ENCODE measurements at regions of chr16 and their contacts with region 1.

Region 1: GRCh38 chr16:30585400-30586189 is at the start of gene ZNF785:
- DNase-seq: peak; percentile 98
- ATAC-seq: peak; percentile 98
- H3K4me3 Mint-ChIP-seq: peak within 1 kb of the TSS; percentile 96
- H3K27ac Mint-ChIP-seq: peak within 1 kb of the TSS; percentile 87
- H3K4me1 Mint-ChIP-seq: peaks cover 30% of the 10 kb centered on the region
- H3K27me3 Mint-ChIP-seq: no peaks in the 10 kb centered on the region
- total RNA-seq, gene ZNF785: 11.7 to 13.7 TPM

Region 2: DNA sequence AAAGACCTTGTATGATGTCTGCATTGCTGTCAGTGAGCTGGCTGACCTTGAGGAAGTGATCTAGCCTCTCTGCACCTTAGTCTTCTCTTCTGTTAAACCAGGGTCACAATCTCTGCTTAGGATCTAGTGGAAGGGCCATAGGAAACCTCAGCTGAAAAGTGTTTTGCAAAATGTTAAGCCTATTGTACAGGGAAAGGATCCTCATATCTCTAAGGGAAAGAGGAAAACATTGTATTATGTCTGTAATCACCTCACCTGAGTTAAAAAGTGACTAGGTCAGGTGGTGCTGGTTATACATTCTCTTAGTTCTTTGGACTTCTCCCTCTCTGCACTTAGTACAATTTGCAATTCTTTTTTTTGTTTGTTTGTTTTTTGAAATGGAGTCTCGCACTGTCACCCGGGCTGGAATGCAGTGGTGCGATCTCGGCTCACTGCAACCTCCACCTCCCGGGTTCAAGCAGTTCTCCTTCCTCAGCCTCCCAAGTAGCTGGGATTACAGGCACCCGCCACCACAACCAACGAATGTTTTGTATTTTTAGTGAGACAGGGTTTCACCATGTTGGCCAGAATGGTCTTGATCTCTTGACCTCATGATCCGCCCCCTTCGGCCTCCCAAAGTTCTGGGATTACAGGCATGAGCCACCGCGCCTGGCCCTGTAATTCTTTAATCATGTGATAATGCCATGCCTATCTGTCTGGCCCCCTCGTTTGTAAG is 137.9 kb before region 1 on chr16:
- CTCF ChIA-PET with region 1: no interaction called
- POLR2A ChIA-PET with region 1: no interaction called
- DNase-seq: no peak
- ATAC-seq: no peak
- H3K4me3 Mint-ChIP-seq: no peak overlapping the region
- H3K27ac Mint-ChIP-seq: no peak overlapping the region
- H3K4me1 Mint-ChIP-seq: peaks cover 63% of the 10 kb centered on the region
- H3K27me3 Mint-ChIP-seq: no peaks in the 10 kb centered on the region

Region 3: DNA sequence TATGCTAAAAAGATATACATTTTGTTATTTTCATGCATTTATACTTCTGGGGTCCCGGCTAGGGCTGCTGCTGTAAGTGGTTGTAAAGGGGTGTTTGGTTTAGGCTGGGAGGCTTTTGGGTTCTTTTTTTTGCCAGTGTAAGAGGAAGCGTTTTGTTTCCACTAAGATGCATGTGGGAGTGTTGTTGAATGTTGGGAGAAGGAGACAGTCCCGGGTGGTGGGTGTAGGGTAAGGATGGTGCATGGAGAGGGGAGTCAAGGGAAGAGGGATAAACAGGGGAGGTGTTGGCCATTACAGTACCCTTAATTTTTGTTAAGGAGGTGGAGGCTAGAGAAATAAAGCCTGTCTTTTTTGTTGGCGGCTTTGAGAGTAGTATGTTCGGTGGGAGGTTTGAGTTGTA is 42.5 kb before region 1 on chr16:
- CTCF ChIA-PET with region 1: no interaction called
- POLR2A ChIA-PET with region 1: no interaction called
- DNase-seq: no peak
- ATAC-seq: no peak
- H3K4me3 Mint-ChIP-seq: no peak overlapping the region
- H3K27ac Mint-ChIP-seq: no peak overlapping the region
- H3K4me1 Mint-ChIP-seq: peaks cover 3% of the 10 kb centered on the region
- H3K27me3 Mint-ChIP-seq: no peaks in the 10 kb centered on the region

Region 4: DNA sequence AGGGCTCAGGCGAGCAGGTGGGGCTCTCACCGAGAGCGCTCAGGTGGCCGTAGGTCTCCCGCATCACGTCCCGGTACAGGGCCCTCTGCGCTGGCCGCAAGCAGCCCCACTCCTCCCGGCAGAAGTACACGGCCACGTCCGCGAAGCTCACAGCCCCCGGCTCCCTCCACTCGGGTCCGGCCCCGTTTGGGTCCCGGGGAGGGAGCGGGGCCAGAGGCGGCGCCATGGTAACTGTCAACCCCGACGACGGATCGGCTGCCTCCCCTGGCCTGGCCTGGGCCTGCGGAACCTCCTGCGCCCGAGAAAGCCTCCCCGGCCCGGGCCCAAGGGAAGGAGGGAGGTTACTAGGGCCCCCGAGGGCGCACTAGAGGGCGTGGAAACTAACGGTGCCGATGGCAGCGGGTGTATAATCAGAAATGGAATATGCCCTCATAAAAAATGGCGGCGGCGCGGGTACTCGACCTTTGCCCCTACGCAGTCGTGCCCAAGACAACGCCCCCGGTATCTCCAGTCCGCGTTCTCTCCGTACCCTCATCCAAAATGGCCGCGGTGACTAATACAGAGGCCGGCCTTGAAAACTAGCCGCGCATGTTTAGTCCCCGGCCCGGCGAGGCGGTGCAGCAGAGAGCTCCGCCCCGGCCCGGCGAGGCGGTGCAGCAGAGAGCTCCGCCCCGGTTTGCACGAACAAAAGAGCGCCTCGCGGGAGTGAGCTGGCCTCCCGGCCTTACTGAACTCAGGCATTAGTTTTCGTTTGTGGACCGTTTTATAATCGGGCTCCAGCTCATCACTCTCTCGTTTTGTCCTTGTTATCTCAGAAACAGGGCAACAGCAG is 27.4 kb before region 1 on chr16 and contains the start of gene ZNF764:
- CTCF ChIA-PET with region 1: interaction called, 13 read pairs
- POLR2A ChIA-PET with region 1: interaction called, 24 read pairs
- DNase-seq: peak; percentile 99
- ATAC-seq: peak; percentile 96
- H3K4me3 Mint-ChIP-seq: peak within 1 kb of the TSS; percentile 87
- H3K27ac Mint-ChIP-seq: peak within 1 kb of the TSS; percentile 86
- H3K4me1 Mint-ChIP-seq: peaks cover 46% of the 10 kb centered on the region
- H3K27me3 Mint-ChIP-seq: peaks cover 3% of the 10 kb centered on the region
- total RNA-seq, gene ZNF764: 15.2 to 15.4 TPM

Measured in activated CD8-positive, alpha-beta T cell treated with anti-CD3 and anti-CD28 coated beads, Interleukin-2, amount 10 ng/mL, durations not matched to agents 7 days and 5 days (primary cell).